ENCODE measurements at regions of chr9 and their contacts with region 1.

Region 1: DNA sequence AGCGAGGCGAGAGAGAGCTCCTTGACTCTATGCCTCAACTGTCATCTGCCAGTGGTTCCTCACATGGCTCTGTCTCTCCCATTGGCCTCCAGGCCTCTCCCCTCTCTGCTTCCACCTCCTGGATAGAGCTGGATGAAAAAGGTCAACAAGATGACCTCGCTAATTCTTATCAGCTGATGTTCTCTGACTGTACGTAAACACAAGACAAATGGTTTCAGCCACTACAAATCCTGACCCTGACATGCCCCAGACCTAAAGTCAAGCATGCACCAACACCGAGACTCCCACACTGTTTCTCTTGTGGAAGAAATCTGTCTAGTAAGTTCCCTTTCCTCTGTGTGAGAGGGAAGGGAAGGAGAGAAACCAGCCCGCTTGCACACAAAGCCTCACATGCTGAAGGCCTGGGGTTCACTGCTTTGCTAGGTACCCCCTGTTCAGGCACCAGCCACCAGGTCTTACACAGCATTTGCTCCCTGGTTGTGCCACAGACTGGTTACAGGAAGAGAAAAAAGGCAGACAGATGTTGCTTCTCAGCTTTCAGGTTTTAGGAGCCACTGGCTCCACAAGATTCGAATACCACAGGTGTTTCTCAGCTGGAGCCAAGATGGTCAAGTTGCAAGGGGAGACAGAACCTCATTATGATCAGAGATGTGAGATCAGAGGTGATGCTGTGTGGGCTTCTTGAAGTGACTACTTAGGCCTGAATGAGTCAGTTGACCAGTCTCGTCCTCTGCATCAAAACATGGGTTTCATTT is 592.5 kb downstream of the CCDC171 start:
- DNase-seq: no peak
- ATAC-seq: no peak
- H3K4me3 ChIP-seq: no peak overlapping the region
- H3K4me3 Mint-ChIP-seq: no peak overlapping the region
- H3K27ac ChIP-seq: no peak overlapping the region
- H3K27ac Mint-ChIP-seq: no peak overlapping the region
- H3K4me1 ChIP-seq: no peaks in the 10 kb centered on the region
- H3K4me1 Mint-ChIP-seq: no peaks in the 10 kb centered on the region
- H3K27me3 ChIP-seq: peaks cover 0 to 4% of the 10 kb centered on the region in 2 experiments
- H3K27me3 Mint-ChIP-seq: peaks cover 0 to 3% of the 10 kb centered on the region in 2 donors

Region 2: DNA sequence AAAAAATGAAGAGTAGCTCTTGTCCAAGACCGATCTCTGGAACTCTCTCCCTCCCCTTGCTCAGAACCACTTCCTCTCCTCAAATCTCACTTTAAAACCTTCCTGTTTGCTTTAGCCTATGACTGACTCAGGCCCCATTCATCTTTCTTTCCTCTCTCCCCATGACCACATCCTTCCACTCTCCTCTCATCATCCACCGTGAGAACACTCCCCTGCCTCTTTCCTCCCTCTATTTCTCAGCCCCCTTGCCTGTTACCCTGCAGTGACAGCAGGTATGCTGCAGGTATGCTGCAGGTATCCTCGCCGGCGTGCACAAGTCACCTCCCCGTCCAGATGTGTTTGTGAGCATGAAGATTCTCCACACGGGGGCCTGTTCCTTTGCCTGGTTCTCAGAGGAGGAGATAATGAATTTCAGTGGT is 87.2 kb before region 1 on chr9:
- CTCF ChIA-PET with region 1: no interaction called
- POLR2A ChIA-PET with region 1: no interaction called
- DNase-seq: no peak
- ATAC-seq: peak; percentile 35 to 64 (median 42)
- H3K4me3 ChIP-seq: peak overlapping the region in 1 of 2 donors; percentile 51
- H3K4me3 Mint-ChIP-seq: peak overlapping the region in 2 of 3 donors; percentile 2 to 56
- H3K27ac ChIP-seq: no peak overlapping the region
- H3K27ac Mint-ChIP-seq: no peak overlapping the region
- H3K4me1 ChIP-seq: peaks cover 11 to 31% of the 10 kb centered on the region in 2 experiments
- H3K4me1 Mint-ChIP-seq: peaks cover 5 to 14% (median 7%) of the 10 kb centered on the region in 3 donors
- H3K27me3 ChIP-seq: no peaks in the 10 kb centered on the region
- H3K27me3 Mint-ChIP-seq: peaks cover 0 to 2% of the 10 kb centered on the region in 2 donors

Region 3: GRCh38 chr9:16133556-16134227 is 11.7 kb before region 1 on chr9:
- CTCF ChIA-PET with region 1: no interaction called
- POLR2A ChIA-PET with region 1: no interaction called
- DNase-seq: peak in 1 of 35 experiments; percentile 31
- ATAC-seq: peak in 1 of 4 experiments; percentile 24
- H3K4me3 ChIP-seq: no peak overlapping the region
- H3K4me3 Mint-ChIP-seq: no peak overlapping the region
- H3K27ac ChIP-seq: no peak overlapping the region
- H3K27ac Mint-ChIP-seq: no peak overlapping the region
- H3K4me1 ChIP-seq: no peaks in the 10 kb centered on the region
- H3K4me1 Mint-ChIP-seq: no peaks in the 10 kb centered on the region
- H3K27me3 ChIP-seq: no peaks in the 10 kb centered on the region
- H3K27me3 Mint-ChIP-seq: peaks cover 4 to 13% of the 10 kb centered on the region in 2 donors

Region 4: DNA sequence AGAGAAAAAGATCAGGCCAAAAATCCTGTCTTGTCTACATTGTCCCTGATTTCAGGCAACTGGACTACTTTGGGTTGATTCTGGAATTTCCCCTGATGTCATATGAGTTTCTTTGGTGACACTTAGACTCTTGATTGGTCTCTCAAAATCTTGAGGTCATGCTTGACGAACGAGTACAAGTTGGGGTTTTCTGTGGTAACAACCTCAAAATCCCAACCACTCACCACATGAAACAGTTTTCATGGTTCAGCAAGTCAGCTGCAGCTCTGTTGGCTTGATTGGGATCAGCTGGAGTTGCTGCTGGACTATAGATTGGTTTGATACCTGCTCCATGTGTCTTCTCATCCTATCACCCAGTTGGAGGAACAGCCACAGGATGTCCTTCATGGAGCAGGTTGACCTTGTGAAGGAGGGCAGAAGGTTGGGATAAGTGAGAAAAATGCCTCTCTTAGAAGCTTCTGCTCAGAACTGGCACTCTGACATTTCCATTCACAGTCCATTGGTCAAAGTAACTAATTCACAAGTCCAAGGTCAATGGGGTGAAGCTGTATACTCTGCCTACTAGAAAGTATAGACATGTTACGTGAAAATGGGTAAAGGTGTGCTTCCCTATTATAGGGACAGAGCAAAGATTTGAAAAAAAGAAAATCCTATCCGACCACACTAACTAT is 1718.0 kb after region 1 on chr9:
- CTCF ChIA-PET with region 1: interaction called in 1 of 2 experiments, 11 read pairs
- POLR2A ChIA-PET with region 1: no interaction called
- DNase-seq: no peak
- ATAC-seq: no peak
- H3K4me3 ChIP-seq: no peak overlapping the region
- H3K4me3 Mint-ChIP-seq: no peak overlapping the region
- H3K27ac ChIP-seq: no peak overlapping the region
- H3K27ac Mint-ChIP-seq: no peak overlapping the region
- H3K4me1 ChIP-seq: no peaks in the 10 kb centered on the region
- H3K4me1 Mint-ChIP-seq: no peaks in the 10 kb centered on the region
- H3K27me3 ChIP-seq: no peaks in the 10 kb centered on the region
- H3K27me3 Mint-ChIP-seq: no peaks in the 10 kb centered on the region

Measured in T-cell (primary cell).